ENCODE measurements at regions of chr22 and their contacts with region 1.

Region 1: GRCh38 chr22:45731798-45732495 is 60.3 kb downstream of the ATXN10 start:
- DNase-seq: no peak
- H3K4me3 ChIP-seq: no peak overlapping the region
- H3K27me3 ChIP-seq: no peaks in the 10 kb centered on the region
- CTCF ChIP-seq: peak; percentile 53

Region 2: DNA sequence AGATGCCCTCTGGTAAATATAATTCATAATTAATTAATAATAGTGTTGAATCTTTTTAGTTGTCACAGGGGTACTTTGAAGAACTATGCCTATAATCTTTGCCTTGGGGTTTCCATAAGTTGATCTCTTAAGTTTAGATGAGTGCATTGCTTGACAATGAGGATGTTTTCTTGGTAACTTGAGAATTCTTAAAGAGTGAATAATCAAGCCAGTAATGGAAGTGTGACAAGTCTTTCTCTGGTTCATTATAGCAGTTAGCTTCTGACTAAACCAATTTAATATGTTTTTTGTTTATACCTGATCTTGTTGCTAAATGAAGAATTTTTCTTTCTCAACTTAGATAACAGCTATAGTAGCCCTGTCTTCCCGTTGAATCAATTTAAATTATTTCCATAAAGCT is 14.2 kb before region 1 on chr22:
- CTCF ChIA-PET with region 1: interaction called, 18 read pairs
- POLR2A ChIA-PET with region 1: interaction called, 11 read pairs
- DNase-seq: peak; percentile 69
- H3K4me3 ChIP-seq: no peak overlapping the region
- H3K27me3 ChIP-seq: no peaks in the 10 kb centered on the region
- CTCF ChIP-seq: no peak